Dorsolateral prefrontal cortex (tissue), 120 donors: ENCODE measurements at regions of chr2 and their contacts with region 1.

Region 1: GRCh38 chr2:231364961-231365810 is 30.3 kb upstream of the B3GNT7 start:
- DNase-seq: peak in 5 of 10 donors; percentile 30 to 74 (median 63)
- H3K4me3 ChIP-seq: peak overlapping the region in 11 of 59 donors; percentile 2 to 33 (median 12)
- H3K27ac ChIP-seq: peak overlapping the region in 58 of 59 donors; percentile 77 to 97 (median 92)
- H3K27me3 ChIP-seq: no peaks in the 10 kb centered on the region
- CTCF ChIP-seq: peak in 1 of 56 donors; percentile 11

Region 2: GRCh38 chr2:231138699-231139098 is 226.5 kb before region 1 on chr2:
- intact Hi-C with region 1: no loop called
- DNase-seq: no peak
- H3K4me3 ChIP-seq: no peak overlapping the region
- H3K27ac ChIP-seq: no peak overlapping the region
- H3K27me3 ChIP-seq: no peaks in the 10 kb centered on the region
- CTCF ChIP-seq: no peak

Region 3: DNA sequence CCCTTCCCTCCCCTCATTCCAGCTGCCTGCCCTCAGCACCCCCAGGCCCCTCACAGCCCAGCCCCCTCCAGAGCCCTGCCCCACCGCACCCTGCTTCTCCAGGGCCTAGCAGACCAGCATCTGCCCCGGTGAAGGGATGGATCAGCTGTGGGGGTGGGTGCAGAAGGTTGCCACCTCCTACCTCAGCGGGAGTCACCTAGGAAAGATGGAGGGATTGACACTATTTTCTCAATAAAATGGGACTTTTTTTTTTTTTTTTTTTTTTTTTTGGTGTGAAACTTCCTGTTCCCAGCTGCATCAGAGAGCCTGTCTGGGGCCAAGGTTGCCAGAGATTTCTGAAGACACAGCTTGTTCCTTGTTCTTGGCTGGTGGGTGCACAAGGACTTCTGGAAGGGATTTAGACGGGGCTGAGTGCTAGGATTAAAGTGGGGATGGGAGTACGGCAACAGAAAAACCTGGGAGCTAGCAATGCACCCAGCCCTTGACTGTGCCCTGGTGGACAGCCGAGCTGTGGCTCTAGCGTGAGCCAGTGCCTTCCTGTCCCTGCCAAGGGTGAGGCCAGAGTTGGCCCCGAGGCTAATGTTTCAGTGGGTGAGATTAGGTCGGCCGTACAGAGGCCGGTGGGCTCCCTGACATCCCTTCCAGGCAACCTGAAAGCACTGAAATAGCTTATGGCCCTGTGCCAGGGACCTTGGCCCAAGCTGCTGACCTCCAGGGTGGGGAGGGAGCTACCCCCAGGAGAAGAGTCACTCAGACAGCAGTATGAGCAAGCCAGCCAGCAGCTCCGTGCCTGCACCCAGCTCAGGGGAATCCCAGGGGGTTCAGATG is 34.9 kb after region 1 on chr2:
- intact Hi-C with region 1: loop called in 1 of 2 experiments (anchors 5 kb)
- DNase-seq: peak in 3 of 10 donors; percentile 50 to 58 (median 51)
- H3K4me3 ChIP-seq: peak overlapping the region in 1 of 59 donors; percentile 12
- H3K27ac ChIP-seq: peak overlapping the region in 46 of 59 donors; percentile 10 to 88 (median 63)
- H3K27me3 ChIP-seq: peaks cover 0 to 15% (median 3%) of the 10 kb centered on the region in 45 donors
- CTCF ChIP-seq: peak in 14 of 56 donors; percentile 6 to 38 (median 26)